Activated CD4-positive, alpha-beta T cell treated with anti-CD3 and anti-CD28 coated beads for 36 hours (primary cell): ENCODE measurements at regions of chr15 and their contacts with region 1.

Region 1: DNA sequence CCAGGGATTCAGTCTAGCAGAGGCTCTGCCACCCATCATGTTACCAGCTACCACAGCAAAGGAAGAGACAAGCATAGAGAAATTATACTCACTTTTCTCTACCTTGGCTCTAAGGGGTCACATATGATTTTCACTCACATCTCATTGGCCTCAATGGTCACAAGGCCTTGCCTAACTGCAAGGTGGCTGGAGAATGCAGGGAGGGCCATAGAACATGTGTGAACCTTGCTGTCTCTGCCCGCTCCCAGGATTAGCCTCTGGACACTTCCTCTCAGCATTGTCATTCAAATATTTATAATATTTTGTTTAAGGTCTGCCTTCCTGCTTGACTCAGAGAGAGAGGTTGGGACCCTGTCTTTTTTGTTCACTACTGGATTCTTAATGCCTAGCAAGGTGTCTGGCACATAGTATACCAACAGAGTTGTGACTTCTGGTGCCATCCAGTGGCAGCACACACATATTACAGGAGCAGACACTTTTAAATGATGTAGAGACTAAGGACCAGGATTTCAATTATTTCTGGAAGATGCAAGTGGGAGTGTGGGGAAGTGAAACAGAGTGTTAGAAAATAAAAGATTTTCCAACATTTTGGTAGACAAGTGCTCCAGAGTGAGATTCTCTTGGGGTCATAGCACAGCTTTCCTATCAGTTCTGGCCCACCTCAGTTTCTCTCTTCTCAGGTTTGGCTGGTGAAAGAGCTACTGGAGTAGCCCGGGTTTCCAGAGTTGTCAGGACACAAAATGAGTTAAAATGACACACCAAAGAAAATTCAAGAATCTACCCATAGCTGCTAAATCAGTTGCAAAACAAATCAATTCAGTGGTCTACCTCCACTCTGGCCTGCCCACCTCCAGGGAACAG is 119.0 kb upstream of the RASGRP1 start:
- DNase-seq: peak; percentile 86
- ATAC-seq: peak; percentile 73
- H3K4me3 Mint-ChIP-seq: no peak overlapping the region
- H3K27ac Mint-ChIP-seq: peak overlapping the region; percentile 80
- H3K4me1 Mint-ChIP-seq: peaks cover 79% of the 10 kb centered on the region
- H3K27me3 Mint-ChIP-seq: no peaks in the 10 kb centered on the region

Region 2: DNA sequence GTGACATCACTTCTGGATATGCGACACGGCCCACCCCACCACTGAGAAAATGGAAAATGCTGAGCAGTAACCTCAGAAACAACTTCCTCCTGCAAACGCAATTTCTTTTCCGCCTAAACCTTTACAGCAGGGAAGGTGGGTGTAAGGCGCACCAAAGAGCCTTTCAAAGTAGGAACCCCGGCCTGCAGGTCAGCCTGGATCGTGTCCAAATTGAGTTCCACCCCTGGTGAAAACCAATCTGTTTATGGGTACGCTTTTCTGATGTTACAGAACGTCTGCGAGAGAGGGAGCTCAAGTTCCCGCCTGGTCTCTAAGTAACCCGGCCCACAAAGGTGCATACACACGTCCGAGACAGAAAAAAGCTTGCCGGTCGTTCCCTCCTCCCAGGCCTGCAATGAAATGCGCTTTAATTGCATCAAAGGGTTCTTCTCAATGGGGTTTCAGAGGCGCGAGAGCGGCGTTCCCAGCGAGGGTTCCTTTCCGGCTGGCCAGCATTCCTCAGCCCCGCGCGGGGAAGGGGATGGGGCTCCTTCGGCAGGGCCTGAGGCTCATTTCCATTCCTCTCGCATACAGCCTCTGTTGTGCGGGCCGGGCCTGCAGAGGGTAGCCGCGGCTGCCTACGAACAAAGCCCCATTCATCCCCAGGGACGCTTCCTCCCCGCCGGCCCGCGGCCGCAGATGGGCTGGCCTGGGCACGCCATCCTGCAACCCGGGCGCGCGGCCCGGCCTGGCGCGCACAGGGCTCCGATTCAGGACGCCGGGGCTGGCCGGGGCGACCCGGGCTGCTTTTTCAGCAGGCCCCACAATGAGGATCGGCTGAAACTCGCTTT is 611.0 kb before region 1 on chr15:
- CTCF ChIA-PET with region 1: no interaction called
- POLR2A ChIA-PET with region 1: no interaction called
- intact Hi-C with region 1: loop called in 1 of 2 experiments (anchors 10 kb)
- DNase-seq: peak; percentile 53
- ATAC-seq: peak; percentile 52
- H3K4me3 Mint-ChIP-seq: peak overlapping the region; percentile 49
- H3K27ac Mint-ChIP-seq: peak overlapping the region; percentile 73
- H3K4me1 Mint-ChIP-seq: peaks cover 45% of the 10 kb centered on the region
- H3K27me3 Mint-ChIP-seq: peaks cover 56% of the 10 kb centered on the region

Region 3: GRCh38 chr15:38474155-38474757 is 209.4 kb before region 1 on chr15:
- CTCF ChIA-PET with region 1: interaction called, 70 read pairs
- POLR2A ChIA-PET with region 1: interaction called, 3 read pairs
- intact Hi-C with region 1: loop called (anchors 1 kb)
- DNase-seq: peak; percentile 30
- ATAC-seq: peak; percentile 97
- H3K4me3 Mint-ChIP-seq: no peak overlapping the region
- H3K27ac Mint-ChIP-seq: no peak overlapping the region
- H3K4me1 Mint-ChIP-seq: peaks cover 11% of the 10 kb centered on the region
- H3K27me3 Mint-ChIP-seq: no peaks in the 10 kb centered on the region

Region 4: DNA sequence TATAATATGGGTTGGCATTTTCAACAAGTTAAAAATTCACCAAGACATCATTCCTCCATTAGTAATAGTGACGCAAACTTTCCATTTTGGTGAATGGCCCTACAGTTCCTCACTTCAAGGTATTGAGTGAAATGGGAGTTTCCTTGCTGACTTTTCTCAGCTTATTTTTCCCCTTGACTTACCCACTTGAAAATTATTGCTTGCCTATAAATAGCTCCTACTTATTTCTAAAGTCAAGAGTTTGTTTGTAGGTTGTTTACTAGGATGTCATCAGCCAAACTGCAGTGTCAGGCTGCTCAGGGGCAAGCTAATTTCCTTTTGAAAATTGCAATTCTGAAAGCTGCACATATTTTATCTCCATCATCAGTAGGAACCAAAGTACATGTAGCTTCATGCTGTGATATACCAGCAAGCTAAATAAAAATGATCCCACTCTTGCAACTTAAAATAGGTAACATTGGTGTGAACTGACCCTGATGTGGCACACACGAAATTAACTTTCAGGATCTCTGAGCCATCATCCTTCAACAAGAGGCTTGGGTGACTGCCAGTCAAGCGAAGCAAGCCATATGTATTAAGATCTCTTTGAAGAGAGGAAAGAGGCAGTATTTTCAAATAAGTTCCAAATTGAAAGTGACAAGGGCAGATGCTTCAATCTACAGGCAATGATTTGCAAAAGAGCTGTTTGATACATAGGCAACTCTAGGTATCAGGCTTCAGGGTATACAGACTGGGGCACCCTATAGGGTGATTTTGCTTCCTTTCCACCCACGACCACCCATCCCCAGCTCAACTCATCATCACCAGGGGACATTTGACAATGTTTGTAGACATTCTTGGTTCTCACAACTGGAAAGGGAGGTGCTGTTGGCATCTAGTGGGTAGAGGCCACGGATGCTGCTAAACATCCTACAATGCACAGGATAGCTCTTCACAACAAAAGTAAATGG is 52.2 kb before region 1 on chr15:
- CTCF ChIA-PET with region 1: interaction called, 12 read pairs
- POLR2A ChIA-PET with region 1: no interaction called
- intact Hi-C with region 1: no loop called
- DNase-seq: no peak
- ATAC-seq: peak; percentile 69
- H3K4me3 Mint-ChIP-seq: no peak overlapping the region
- H3K27ac Mint-ChIP-seq: peak overlapping the region; percentile 88
- H3K4me1 Mint-ChIP-seq: peaks cover 54% of the 10 kb centered on the region
- H3K27me3 Mint-ChIP-seq: no peaks in the 10 kb centered on the region

Region 5: GRCh38 chr15:38671675-38672254 is 11.8 kb before region 1 on chr15:
- CTCF ChIA-PET with region 1: interaction called, 205 read pairs
- POLR2A ChIA-PET with region 1: interaction called, 19 read pairs
- intact Hi-C with region 1: loop called (anchors 1 kb)
- DNase-seq: peak; percentile 65
- ATAC-seq: peak; percentile 55
- H3K4me3 Mint-ChIP-seq: peak overlapping the region; percentile 60
- H3K27ac Mint-ChIP-seq: peak overlapping the region; percentile 98
- H3K4me1 Mint-ChIP-seq: peaks cover 75% of the 10 kb centered on the region
- H3K27me3 Mint-ChIP-seq: no peaks in the 10 kb centered on the region

Region 6: GRCh38 chr15:38733331-38733730 is 49.7 kb after region 1 on chr15:
- CTCF ChIA-PET with region 1: no interaction called
- POLR2A ChIA-PET with region 1: no interaction called
- intact Hi-C with region 1: no loop called
- DNase-seq: no peak
- ATAC-seq: no peak
- H3K4me3 Mint-ChIP-seq: no peak overlapping the region
- H3K27ac Mint-ChIP-seq: no peak overlapping the region
- H3K4me1 Mint-ChIP-seq: no peaks in the 10 kb centered on the region
- H3K27me3 Mint-ChIP-seq: peaks cover 10% of the 10 kb centered on the region

Region 7: DNA sequence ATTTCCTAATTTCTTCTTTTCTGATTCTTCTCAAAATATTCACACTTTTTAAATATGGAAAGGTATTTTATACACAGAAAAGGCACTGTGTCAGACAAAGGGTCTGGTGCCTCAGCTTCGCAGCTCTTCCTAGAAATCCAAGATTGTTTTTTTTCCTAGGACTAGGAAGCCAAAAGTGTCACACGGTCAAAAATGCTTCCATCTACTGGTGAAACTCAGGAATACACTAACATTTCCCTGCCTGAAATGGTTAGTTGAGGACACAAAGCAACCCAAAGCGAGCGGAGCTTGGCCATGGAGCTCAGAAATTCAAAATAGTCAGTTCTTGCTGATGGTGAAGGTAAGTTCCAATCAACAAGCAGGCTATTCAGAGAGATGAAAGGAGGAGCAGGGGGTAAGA is 307.5 kb after region 1 on chr15:
- CTCF ChIA-PET with region 1: no interaction called
- POLR2A ChIA-PET with region 1: no interaction called
- intact Hi-C with region 1: no loop called
- DNase-seq: no peak
- ATAC-seq: no peak
- H3K4me3 Mint-ChIP-seq: no peak overlapping the region
- H3K27ac Mint-ChIP-seq: no peak overlapping the region
- H3K4me1 Mint-ChIP-seq: no peaks in the 10 kb centered on the region
- H3K27me3 Mint-ChIP-seq: peaks cover 7% of the 10 kb centered on the region